WTC11 (cell line): ENCODE measurements at regions of chr19 and their contacts with region 1.

Region 1: GRCh38 chr19:3984908-3985642 is at the start of gene EEF2:
- DNase-seq: peak; percentile 91
- ATAC-seq: 0 out of 2 replicates have a peak, but pooled peaks have one; percentile 5
- H3K4me3 Mint-ChIP-seq: peak within 1 kb of the TSS; percentile 96
- H3K27ac Mint-ChIP-seq: peak within 1 kb of the TSS; percentile 98
- H3K4me1 Mint-ChIP-seq: peaks cover 39% of the 10 kb centered on the region
- H3K27me3 Mint-ChIP-seq: peaks cover 7% of the 10 kb centered on the region
- CTCF ChIP-seq: no peak
- total RNA-seq, gene EEF2: 3,572 to 3,864 TPM (median 3,852 TPM) in 3 replicates

Region 2: GRCh38 chr19:3783660-3784584 is 201.2 kb before region 1 on chr19:
- CTCF ChIA-PET with region 1: interaction called, 10 read pairs
- POLR2A ChIA-PET with region 1: interaction called, 3 read pairs
- DNase-seq: peak; percentile 75
- ATAC-seq: peak; percentile 80
- H3K4me3 Mint-ChIP-seq: peak overlapping the region; percentile 75
- H3K27ac Mint-ChIP-seq: no peak overlapping the region
- H3K4me1 Mint-ChIP-seq: peaks cover 7% of the 10 kb centered on the region
- H3K27me3 Mint-ChIP-seq: peaks cover 17% of the 10 kb centered on the region
- CTCF ChIP-seq: peak; percentile 66

Region 3: GRCh38 chr19:3868770-3869456 is 116.2 kb before region 1 on chr19 and contains the start of gene ZFR2:
- CTCF ChIA-PET with region 1: interaction called, 12 read pairs
- POLR2A ChIA-PET with region 1: interaction called, 6 read pairs
- DNase-seq: peak; percentile 83
- ATAC-seq: peak; percentile 73
- H3K4me3 Mint-ChIP-seq: peak within 1 kb of the TSS; percentile 65
- H3K27ac Mint-ChIP-seq: peak within 1 kb of the TSS; percentile 36; the same call in 1 of the 2 replicates
- H3K4me1 Mint-ChIP-seq: peaks cover 17% of the 10 kb centered on the region
- H3K27me3 Mint-ChIP-seq: peaks cover 44% of the 10 kb centered on the region
- CTCF ChIP-seq: no peak
- total RNA-seq, gene ZFR2: 17.5 to 25.5 TPM (median 22.6 TPM) in 3 replicates

Region 4: GRCh38 chr19:3932931-3933810 is 51.9 kb before region 1 on chr19 and contains the start of gene NMRK2:
- CTCF ChIA-PET with region 1: interaction called, 15 read pairs
- POLR2A ChIA-PET with region 1: interaction called, 4 read pairs
- DNase-seq: peak; percentile 78
- ATAC-seq: peak; percentile 80
- H3K4me3 Mint-ChIP-seq: peak within 1 kb of the TSS; percentile 80
- H3K27ac Mint-ChIP-seq: peak within 1 kb of the TSS; percentile 96
- H3K4me1 Mint-ChIP-seq: peaks cover 7% of the 10 kb centered on the region
- H3K27me3 Mint-ChIP-seq: no peaks in the 10 kb centered on the region
- CTCF ChIP-seq: no peak
- total RNA-seq, gene NMRK2: 50.4 to 61.9 TPM (median 51.1 TPM) in 3 replicates

Region 5: DNA sequence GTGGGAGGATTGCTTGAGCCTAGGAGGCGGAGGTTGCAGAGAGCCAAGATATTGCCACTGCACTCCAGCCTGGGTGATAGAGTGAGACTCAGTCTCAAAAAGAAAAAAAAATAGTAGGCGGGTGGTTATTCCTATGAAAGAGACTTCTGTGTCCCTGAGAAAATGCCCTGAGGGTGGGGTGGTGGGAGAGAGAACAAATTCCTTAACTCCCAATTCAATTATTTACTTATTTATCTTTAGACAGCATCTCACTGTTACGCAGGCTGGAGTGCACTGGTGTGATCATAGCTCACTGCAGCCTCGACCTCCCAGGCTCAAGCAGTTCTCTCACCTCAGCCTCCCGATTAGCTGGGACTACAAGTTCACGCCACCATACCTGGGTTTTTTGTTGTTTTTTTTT is 10.6 kb after region 1 on chr19:
- CTCF ChIA-PET with region 1: interaction called, 15 read pairs
- POLR2A ChIA-PET with region 1: interaction called, 3 read pairs
- DNase-seq: no peak
- ATAC-seq: no peak
- H3K4me3 Mint-ChIP-seq: no peak overlapping the region
- H3K27ac Mint-ChIP-seq: no peak overlapping the region
- H3K4me1 Mint-ChIP-seq: no peaks in the 10 kb centered on the region
- H3K27me3 Mint-ChIP-seq: peaks cover 22% of the 10 kb centered on the region
- CTCF ChIP-seq: no peak

Region 6: GRCh38 chr19:4058034-4058692 is 73.1 kb after region 1 on chr19:
- CTCF ChIA-PET with region 1: interaction called, 14 read pairs
- POLR2A ChIA-PET with region 1: no interaction called
- DNase-seq: no peak
- ATAC-seq: no peak; the same call in 1 of the 2 replicates
- H3K4me3 Mint-ChIP-seq: no peak overlapping the region
- H3K27ac Mint-ChIP-seq: no peak overlapping the region
- H3K4me1 Mint-ChIP-seq: peaks cover 23% of the 10 kb centered on the region
- H3K27me3 Mint-ChIP-seq: no peaks in the 10 kb centered on the region
- CTCF ChIP-seq: no peak

Region 7: DNA sequence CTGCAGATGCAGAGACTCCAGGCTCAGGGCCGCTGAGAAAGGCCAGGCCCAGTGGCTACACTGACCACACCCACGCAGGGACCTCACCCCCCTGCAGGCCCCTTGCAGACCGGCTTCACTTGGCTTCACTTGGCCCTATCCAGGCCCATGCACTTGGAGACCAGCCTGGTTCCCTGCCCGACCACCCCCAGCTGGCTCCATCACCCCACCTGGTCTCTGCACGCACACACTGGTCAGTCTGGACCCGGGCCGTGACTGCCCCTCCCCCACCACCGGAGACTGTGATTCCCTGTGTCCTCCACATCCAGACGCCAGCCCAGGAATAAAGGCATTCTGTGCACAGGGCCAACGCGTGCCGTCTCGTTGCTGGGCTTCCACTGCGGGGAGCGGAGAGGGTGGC is 239.4 kb after region 1 on chr19:
- CTCF ChIA-PET with region 1: no interaction called
- POLR2A ChIA-PET with region 1: no interaction called
- DNase-seq: no peak
- ATAC-seq: no peak
- H3K4me3 Mint-ChIP-seq: no peak overlapping the region
- H3K27ac Mint-ChIP-seq: no peak overlapping the region
- H3K4me1 Mint-ChIP-seq: no peaks in the 10 kb centered on the region
- H3K27me3 Mint-ChIP-seq: no peaks in the 10 kb centered on the region; the same call in 1 of the 2 replicates
- CTCF ChIP-seq: no peak